Activated CD4-positive, alpha-beta T cell treated with anti-CD3 and anti-CD28 coated beads, Interleukin-2, amount 10 ng/mL, durations not matched to agents 24 days and 14 days (primary cell): ENCODE measurements at regions of chr15 and their contacts with region 1.

Region 1: GRCh38 chr15:51708013-51708412 is 26.7 kb downstream of the SCG3 start:
- DNase-seq: no peak
- H3K4me3 Mint-ChIP-seq: no peak overlapping the region
- H3K27ac Mint-ChIP-seq: no peak overlapping the region
- H3K4me1 Mint-ChIP-seq: no peaks in the 10 kb centered on the region
- H3K27me3 Mint-ChIP-seq: peaks cover 4% of the 10 kb centered on the region

Region 2: DNA sequence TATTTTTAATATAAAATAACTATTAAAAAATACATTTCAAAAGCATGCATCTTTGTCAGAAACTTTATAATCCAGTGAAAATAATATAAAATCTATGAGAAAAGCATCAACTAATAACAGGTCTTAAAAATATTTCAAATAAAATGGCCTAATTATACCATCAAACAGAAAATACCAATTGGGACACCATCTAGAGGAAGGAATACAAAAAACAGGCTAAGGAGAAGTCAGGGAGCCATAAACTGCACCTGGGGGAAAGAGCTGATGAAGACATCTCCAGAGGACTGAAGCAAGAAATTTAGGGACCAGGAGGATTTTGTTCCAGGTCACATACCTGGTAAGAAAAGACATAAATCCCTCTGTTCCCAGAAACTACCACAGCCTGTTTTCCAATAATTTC is 134.1 kb before region 1 on chr15:
- intact Hi-C with region 1: no loop called
- DNase-seq: no peak
- H3K4me3 Mint-ChIP-seq: no peak overlapping the region
- H3K27ac Mint-ChIP-seq: no peak overlapping the region
- H3K4me1 Mint-ChIP-seq: no peaks in the 10 kb centered on the region
- H3K27me3 Mint-ChIP-seq: no peaks in the 10 kb centered on the region

Region 3: GRCh38 chr15:51750792-51751685 is 43.0 kb after region 1 on chr15 and contains the start of gene TMOD2:
- intact Hi-C with region 1: loop called (anchors 10 kb)
- DNase-seq: peak; percentile 84
- H3K4me3 Mint-ChIP-seq: peak within 1 kb of the TSS; percentile 83
- H3K27ac Mint-ChIP-seq: no peak within 1 kb of the TSS
- H3K4me1 Mint-ChIP-seq: peaks cover 16% of the 10 kb centered on the region
- H3K27me3 Mint-ChIP-seq: peaks cover 49% of the 10 kb centered on the region
- total RNA-seq, gene TMOD2: 4.0 and 4.6 TPM in 2 replicates